MCF 10A (cell line): ENCODE measurements at regions of chr5 and their contacts with region 1.

Region 1: GRCh38 chr5:56814963-56815658 is at the start of gene MAP3K1:
- DNase-seq: peak; percentile 73
- H3K4me3 Mint-ChIP-seq: peak within 1 kb of the TSS; percentile 83
- H3K27ac Mint-ChIP-seq: peak within 1 kb of the TSS; percentile 81
- H3K4me1 Mint-ChIP-seq: peaks cover 14% of the 10 kb centered on the region
- H3K27me3 Mint-ChIP-seq: no peaks in the 10 kb centered on the region
- CTCF ChIP-seq: no peak
- total RNA-seq, gene MAP3K1: 6.6 and 7.9 TPM in 2 replicates

Region 2: DNA sequence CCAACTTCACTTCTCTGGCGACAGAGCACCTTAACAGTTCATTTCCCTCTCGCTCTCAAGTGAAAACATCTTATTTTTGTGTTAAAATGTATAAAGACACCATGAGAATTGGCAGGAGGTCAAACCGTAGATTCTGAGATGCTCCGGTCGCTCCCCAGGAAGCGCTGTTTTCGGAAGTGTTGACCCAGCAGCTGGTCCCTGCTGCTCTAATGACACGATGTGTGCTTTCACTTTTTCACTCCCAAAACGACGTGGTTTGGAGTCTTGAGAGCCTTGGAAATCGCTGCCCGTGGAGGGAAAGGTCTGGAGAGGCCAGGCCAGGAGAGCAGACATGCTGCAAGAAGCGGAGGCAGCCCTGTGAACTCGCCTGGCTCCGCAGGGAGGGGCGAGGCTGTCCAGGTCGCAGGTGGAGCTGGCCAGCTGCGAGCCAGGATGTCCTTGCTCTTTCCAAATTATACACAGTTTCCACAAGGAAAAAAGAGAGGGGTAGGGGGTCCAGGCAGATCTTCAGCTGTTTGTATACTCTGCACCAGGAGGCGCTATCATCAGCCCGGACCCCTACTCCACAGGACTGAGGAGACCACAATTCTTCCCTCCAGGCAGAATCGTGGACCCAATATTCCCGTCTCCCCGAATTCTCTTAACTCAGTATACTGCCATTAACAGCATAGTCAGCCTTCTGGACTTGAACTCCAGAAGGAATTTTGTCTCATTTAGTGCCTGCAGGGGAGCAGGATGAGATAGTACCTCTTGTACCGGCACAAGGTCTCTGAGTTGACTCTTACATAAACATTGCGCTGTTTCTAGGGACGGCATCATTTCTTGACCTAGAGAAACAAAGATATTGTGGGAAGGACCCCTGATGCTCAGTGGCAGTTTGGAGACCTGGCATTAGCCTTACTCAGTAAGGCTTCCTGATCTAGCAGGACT is 333.4 kb before region 1 on chr5:
- CTCF ChIA-PET with region 1: no interaction called
- POLR2A ChIA-PET with region 1: no interaction called
- intact Hi-C with region 1: loop called (anchors 2 kb)
- DNase-seq: peak; percentile 14
- H3K4me3 Mint-ChIP-seq: peak overlapping the region; percentile 73
- H3K27ac Mint-ChIP-seq: peak overlapping the region; percentile 79
- H3K4me1 Mint-ChIP-seq: peaks cover 7% of the 10 kb centered on the region
- H3K27me3 Mint-ChIP-seq: no peaks in the 10 kb centered on the region
- CTCF ChIP-seq: no peak

Region 3: GRCh38 chr5:56525090-56525489 is 290.0 kb before region 1 on chr5:
- CTCF ChIA-PET with region 1: no interaction called
- POLR2A ChIA-PET with region 1: interaction called, 3 read pairs
- intact Hi-C with region 1: loop called (anchors 5 kb)
- DNase-seq: peak; percentile 91
- H3K4me3 Mint-ChIP-seq: no peak overlapping the region
- H3K27ac Mint-ChIP-seq: no peak overlapping the region
- H3K4me1 Mint-ChIP-seq: peaks cover 23% of the 10 kb centered on the region
- H3K27me3 Mint-ChIP-seq: no peaks in the 10 kb centered on the region
- CTCF ChIP-seq: no peak

Region 4: GRCh38 chr5:56543441-56544390 is 271.4 kb before region 1 on chr5:
- CTCF ChIA-PET with region 1: no interaction called
- POLR2A ChIA-PET with region 1: interaction called, 4 read pairs
- intact Hi-C with region 1: loop called (anchors 5 kb)
- DNase-seq: peak; percentile 74
- H3K4me3 Mint-ChIP-seq: no peak overlapping the region
- H3K27ac Mint-ChIP-seq: peak overlapping the region; percentile 24
- H3K4me1 Mint-ChIP-seq: peaks cover 21% of the 10 kb centered on the region
- H3K27me3 Mint-ChIP-seq: no peaks in the 10 kb centered on the region
- CTCF ChIP-seq: no peak

Region 5: GRCh38 chr5:56565644-56566043 is 249.5 kb before region 1 on chr5:
- CTCF ChIA-PET with region 1: no interaction called
- POLR2A ChIA-PET with region 1: no interaction called
- intact Hi-C with region 1: no loop called
- DNase-seq: no peak
- H3K4me3 Mint-ChIP-seq: no peak overlapping the region
- H3K27ac Mint-ChIP-seq: no peak overlapping the region
- H3K4me1 Mint-ChIP-seq: peaks cover 7% of the 10 kb centered on the region
- H3K27me3 Mint-ChIP-seq: no peaks in the 10 kb centered on the region
- CTCF ChIP-seq: no peak

Region 6: GRCh38 chr5:56838409-56839039 is 23.4 kb after region 1 on chr5:
- CTCF ChIA-PET with region 1: interaction called, 17 read pairs
- POLR2A ChIA-PET with region 1: interaction called, 11 read pairs
- intact Hi-C with region 1: no loop called
- DNase-seq: peak; percentile 63
- H3K4me3 Mint-ChIP-seq: peak overlapping the region; percentile 41
- H3K27ac Mint-ChIP-seq: peak overlapping the region; percentile 73
- H3K4me1 Mint-ChIP-seq: peaks cover 32% of the 10 kb centered on the region
- H3K27me3 Mint-ChIP-seq: no peaks in the 10 kb centered on the region
- CTCF ChIP-seq: peak; percentile 74

Region 7: DNA sequence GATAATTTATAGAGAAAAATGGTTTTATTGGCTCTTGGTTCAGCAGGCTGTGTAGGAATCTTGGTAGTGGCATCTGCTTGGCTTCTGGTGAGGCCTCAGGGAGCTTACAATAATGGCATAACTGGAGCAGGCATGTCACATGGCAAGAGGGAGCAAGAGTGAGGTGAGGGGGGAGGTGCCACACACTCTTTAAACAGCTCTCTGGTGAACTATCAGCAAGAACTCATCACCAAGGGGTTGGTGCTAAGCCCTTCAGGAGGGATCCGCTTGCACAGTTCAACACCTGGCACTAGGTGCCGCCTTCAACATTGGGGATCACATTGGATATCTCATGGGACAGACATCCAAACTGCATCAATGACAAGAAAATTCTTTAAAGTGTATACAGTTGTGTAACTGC is 369.2 kb after region 1 on chr5:
- CTCF ChIA-PET with region 1: no interaction called
- POLR2A ChIA-PET with region 1: no interaction called
- intact Hi-C with region 1: no loop called
- DNase-seq: peak; percentile 32
- H3K4me3 Mint-ChIP-seq: no peak overlapping the region
- H3K27ac Mint-ChIP-seq: no peak overlapping the region
- H3K4me1 Mint-ChIP-seq: peaks cover 33% of the 10 kb centered on the region
- H3K27me3 Mint-ChIP-seq: no peaks in the 10 kb centered on the region
- CTCF ChIP-seq: no peak